CD14-positive monocyte (primary cell): ENCODE measurements at regions of chr11 and their contacts with region 1.

Region 1: GRCh38 chr11:67685641-67686495 is 11.4 kb upstream of the ALDH3B2 start:
- DNase-seq: no peak
- H3K4me3 ChIP-seq: no peak overlapping the region
- H3K4me3 Mint-ChIP-seq: peak overlapping the region in 1 of 2 donors; percentile 75
- H3K27ac ChIP-seq: no peak overlapping the region
- H3K27ac Mint-ChIP-seq: peak overlapping the region in 1 of 7 donors; percentile 41
- H3K4me1 ChIP-seq: peaks cover 8 to 11% of the 10 kb centered on the region in 2 donors
- H3K4me1 Mint-ChIP-seq: peaks cover 15% of the 10 kb centered on the region
- H3K27me3 ChIP-seq: no peaks in the 10 kb centered on the region
- H3K27me3 Mint-ChIP-seq: peaks cover 0 to 1% (median 0%) of the 10 kb centered on the region in 3 donors
- CTCF ChIP-seq: no peak

Region 2: GRCh38 chr11:67545280-67545679 is 140.6 kb before region 1 on chr11:
- intact Hi-C with region 1: loop called in 1 of 2 experiments (anchors 10 kb)
- DNase-seq: no peak
- H3K4me3 ChIP-seq: no peak overlapping the region
- H3K4me3 Mint-ChIP-seq: no peak overlapping the region
- H3K27ac ChIP-seq: no peak overlapping the region
- H3K27ac Mint-ChIP-seq: no peak overlapping the region
- H3K4me1 ChIP-seq: no peaks in the 10 kb centered on the region
- H3K4me1 Mint-ChIP-seq: no peaks in the 10 kb centered on the region
- H3K27me3 ChIP-seq: no peaks in the 10 kb centered on the region
- H3K27me3 Mint-ChIP-seq: peaks cover 5 to 10% (median 10%) of the 10 kb centered on the region in 3 donors
- CTCF ChIP-seq: no peak

Region 3: DNA sequence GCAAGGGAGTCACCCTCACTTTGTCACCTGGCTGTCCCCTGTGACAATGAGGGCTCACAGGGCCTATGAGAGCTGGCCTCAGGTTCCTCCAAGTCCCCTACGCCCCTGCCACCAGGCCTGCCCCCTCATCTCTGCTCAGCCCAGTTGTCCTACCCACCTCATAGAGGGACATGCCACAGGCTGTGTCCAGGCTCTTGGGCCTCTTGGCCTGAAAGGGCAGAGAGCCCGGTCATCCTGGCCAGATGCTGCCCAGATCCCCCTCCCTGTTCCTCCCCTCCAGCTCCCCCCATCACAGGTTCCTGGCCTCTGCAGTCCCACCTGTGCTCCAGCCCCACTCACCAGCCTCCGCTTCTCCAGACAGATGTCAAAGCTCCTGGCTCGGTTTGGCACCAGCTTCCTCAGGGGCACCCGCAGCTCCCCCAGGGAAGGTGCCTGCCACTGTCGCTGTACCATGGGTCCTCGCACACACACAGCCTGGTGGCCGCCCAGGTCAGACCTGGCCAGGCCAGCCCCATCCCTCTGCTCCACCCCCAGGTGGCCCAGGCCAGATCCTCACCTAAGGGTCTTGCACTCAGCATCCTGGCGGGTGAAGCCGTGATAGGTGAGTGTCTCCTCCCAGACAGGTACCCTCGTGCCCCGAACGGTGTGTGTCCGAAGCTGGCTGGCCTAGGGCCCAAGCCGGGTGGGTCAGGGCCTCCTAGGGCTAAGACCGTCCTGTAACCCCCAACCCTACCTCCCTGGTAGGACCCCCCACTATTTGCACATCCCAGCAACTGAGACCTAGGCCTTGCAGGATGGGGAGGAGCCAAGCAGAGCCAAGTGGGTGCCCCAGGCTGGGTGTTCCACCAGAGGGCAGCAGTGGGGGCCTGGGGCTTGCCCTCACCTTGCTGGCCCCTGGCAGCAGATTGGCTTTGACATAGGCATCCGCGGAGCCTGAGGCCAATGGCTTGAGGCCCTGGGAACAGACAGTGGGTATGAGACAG is 70.8 kb before region 1 on chr11:
- intact Hi-C with region 1: no loop called
- DNase-seq: peak; percentile 36 to 47 (median 41)
- H3K4me3 ChIP-seq: peak overlapping the region in 1 of 3 experiments; percentile 70
- H3K4me3 Mint-ChIP-seq: peak overlapping the region; percentile 73 to 86
- H3K27ac ChIP-seq: peak overlapping the region; percentile 86 to 96
- H3K27ac Mint-ChIP-seq: peak overlapping the region; percentile 89 to 95 (median 91)
- H3K4me1 ChIP-seq: peaks cover 19 to 24% of the 10 kb centered on the region in 2 donors
- H3K4me1 Mint-ChIP-seq: peaks cover 18% of the 10 kb centered on the region
- H3K27me3 ChIP-seq: peaks cover 0 to 17% of the 10 kb centered on the region in 2 donors
- H3K27me3 Mint-ChIP-seq: peaks cover 22 to 26% (median 25%) of the 10 kb centered on the region in 3 donors
- CTCF ChIP-seq: peak; percentile 71

Region 4: GRCh38 chr11:67629386-67630227 is 56.3 kb before region 1 on chr11 and contains the start of gene NUDT8:
- intact Hi-C with region 1: no loop called
- DNase-seq: peak; percentile 73 to 79 (median 74)
- H3K4me3 ChIP-seq: peak within 1 kb of the TSS; percentile 48 to 86 (median 56)
- H3K4me3 Mint-ChIP-seq: peak within 1 kb of the TSS; percentile 84 to 90
- H3K27ac ChIP-seq: peak within 1 kb of the TSS; percentile 28 to 70
- H3K27ac Mint-ChIP-seq: peak within 1 kb of the TSS; percentile 56 to 92 (median 89)
- H3K4me1 ChIP-seq: peaks cover 16 to 21% of the 10 kb centered on the region in 2 donors
- H3K4me1 Mint-ChIP-seq: peaks cover 10% of the 10 kb centered on the region
- H3K27me3 ChIP-seq: no peaks in the 10 kb centered on the region
- H3K27me3 Mint-ChIP-seq: peaks cover 1 to 5% (median 2%) of the 10 kb centered on the region in 3 donors
- CTCF ChIP-seq: peak; percentile 96
- polyA plus RNA-seq, gene NUDT8: 0.92 to 1.4 (median 1.3) TPM

Region 5: DNA sequence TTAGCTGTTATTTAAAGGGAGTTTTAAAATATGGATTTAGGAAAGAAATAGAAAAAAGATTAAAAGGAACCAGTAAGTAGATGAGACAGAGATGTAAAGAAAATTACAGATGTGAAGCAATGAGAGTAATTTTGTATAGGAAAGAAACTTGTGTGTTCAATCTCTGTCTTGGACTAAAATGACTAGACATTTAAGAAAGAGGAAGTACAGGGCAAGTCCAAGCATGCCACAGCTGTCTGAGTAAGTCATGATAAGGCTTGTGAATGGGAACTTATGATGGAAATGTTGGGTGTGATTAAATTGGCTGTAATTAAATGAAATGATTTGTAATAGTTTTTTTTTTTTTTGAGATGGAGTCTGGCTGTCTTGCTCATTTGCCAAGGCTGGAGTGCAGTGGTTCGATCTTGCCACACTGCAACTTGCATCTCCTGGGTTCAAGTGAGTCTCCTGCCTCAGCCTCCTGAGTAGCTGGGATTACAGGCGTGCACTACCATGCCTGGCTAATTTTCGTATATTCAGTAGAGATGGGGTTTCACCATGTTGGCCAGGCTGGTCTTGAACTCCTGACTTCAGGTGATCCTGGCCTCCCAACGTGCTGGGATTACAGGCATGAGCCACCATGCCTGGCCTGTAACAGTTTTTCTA is 29.5 kb before region 1 on chr11:
- intact Hi-C with region 1: no loop called
- DNase-seq: peak; percentile 34 to 54 (median 52)
- H3K4me3 ChIP-seq: no peak overlapping the region
- H3K4me3 Mint-ChIP-seq: no peak overlapping the region
- H3K27ac ChIP-seq: no peak overlapping the region
- H3K27ac Mint-ChIP-seq: no peak overlapping the region
- H3K4me1 ChIP-seq: no peaks in the 10 kb centered on the region
- H3K4me1 Mint-ChIP-seq: no peaks in the 10 kb centered on the region
- H3K27me3 ChIP-seq: no peaks in the 10 kb centered on the region
- H3K27me3 Mint-ChIP-seq: peaks cover 2 to 6% (median 2%) of the 10 kb centered on the region in 3 donors
- CTCF ChIP-seq: no peak

Region 6: DNA sequence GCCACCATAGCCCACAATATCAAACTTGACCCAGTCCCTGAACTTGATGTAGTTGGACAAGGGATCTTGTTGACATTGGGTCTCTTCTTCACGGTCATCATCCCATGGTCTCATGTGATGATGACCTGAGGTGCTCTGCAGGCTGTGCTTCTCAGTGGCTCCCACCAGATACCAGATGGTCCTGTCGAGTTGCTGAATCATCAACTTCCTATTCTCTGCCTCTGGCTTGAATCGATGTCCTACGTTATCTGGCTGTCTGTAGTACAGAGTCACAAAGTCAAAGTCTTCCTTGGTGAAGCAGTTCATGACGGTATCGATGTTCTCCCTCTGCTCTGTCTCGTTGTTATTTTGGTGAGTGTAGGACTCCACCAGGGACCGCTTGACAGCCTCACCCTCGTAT is 134.2 kb after region 1 on chr11:
- intact Hi-C with region 1: no loop called
- DNase-seq: no peak
- H3K4me3 ChIP-seq: no peak overlapping the region
- H3K4me3 Mint-ChIP-seq: no peak overlapping the region
- H3K27ac ChIP-seq: no peak overlapping the region
- H3K27ac Mint-ChIP-seq: no peak overlapping the region
- H3K4me1 ChIP-seq: no peaks in the 10 kb centered on the region
- H3K4me1 Mint-ChIP-seq: no peaks in the 10 kb centered on the region
- H3K27me3 ChIP-seq: no peaks in the 10 kb centered on the region
- H3K27me3 Mint-ChIP-seq: peaks cover 11 to 27% (median 23%) of the 10 kb centered on the region in 3 donors
- CTCF ChIP-seq: no peak